GM12878 (cell line): ENCODE measurements at regions of chr17 and their contacts with region 1.

Region 1: DNA sequence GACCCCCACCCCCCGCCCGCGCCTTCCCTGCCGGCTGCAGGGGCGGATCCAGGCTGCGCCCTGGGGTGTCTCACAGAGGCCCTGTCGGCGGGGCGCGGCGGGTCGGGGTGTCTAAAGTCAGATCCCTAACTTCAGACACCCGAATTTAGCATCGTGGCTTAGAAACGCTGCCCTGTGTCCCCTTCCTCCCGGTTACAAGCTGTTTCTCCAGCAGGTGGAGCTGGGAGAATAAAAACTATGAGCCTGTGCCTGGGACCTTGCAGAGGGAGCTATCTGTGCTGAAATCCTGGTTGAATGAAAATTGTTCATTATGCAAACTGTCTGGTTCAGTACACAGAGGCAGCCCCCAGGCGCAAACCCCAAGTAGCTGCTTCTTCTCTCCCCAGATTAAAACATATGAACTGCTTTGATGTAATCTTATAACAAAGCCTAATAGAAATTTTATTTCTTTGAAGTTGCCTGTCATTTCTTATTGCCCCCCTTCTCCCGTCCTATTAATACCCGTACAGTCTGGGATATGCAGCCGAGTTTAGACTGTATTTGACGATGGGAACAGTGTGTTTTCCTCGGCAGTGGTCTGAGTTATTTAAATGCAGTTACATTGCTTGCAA is 79.0 kb downstream of the RPA1 start:
- DNase-seq: no peak
- ATAC-seq: peak; percentile 84
- H3K4me3 ChIP-seq: peak overlapping the region; percentile 11; the same call in 1 of the 2 replicates
- H3K27ac ChIP-seq: no peak overlapping the region
- H3K4me1 ChIP-seq: peaks cover 17% of the 10 kb centered on the region
- H3K27me3 ChIP-seq: no peaks in the 10 kb centered on the region
- CTCF ChIP-seq: peak; percentile 48 to 66 (median 49); a peak in 4 of 6 replicates
- EP300 ChIP-seq: no peak
- POLR2A ChIP-seq: no peak
- RAD21 ChIP-seq: peak; percentile 73

Region 2: DNA sequence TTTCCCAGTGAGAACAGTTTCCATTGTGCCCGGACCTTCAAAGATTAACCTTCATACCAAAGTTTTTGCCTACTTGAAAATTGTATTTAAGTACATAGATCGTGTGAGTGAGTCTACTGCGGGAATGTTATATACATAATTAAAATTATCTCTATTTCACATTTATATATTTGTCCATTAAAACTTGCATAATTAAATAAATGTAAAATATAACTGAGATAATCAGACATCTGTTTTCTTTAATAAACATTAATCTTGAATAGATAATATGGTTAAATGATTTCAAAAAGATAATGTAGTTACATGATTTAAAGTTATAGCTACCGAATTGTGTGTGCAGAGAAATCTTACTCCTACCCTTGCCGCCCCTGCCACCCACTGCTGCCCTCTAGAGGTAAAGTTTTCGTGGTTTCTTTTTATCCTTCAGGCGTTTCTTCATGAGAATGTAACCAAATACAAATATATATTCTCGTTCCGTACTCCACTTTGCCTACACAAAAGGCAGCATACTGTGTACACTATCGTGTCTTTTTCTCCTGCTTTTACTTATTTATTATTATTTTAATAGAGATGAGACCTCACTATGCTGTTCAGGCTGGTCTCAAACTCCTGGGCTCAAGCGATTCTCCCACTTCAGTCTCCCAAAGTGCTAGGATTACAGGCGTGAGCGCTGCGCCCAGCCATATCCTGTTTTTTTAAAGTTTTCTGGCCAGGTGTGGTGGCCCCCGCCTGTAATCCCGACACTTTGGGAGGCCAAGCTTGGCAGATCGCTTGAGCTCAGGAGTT is 43.4 kb before region 1 on chr17:
- CTCF ChIA-PET with region 1: no interaction called
- POLR2A ChIA-PET with region 1: no interaction called
- RAD21 ChIA-PET with region 1: no interaction called
- SMC1A ChIA-PET with region 1: no interaction called
- in situ Hi-C with region 1: no loop called
- intact Hi-C with region 1: no loop called
- DNase-seq: no peak
- ATAC-seq: peak; percentile 79
- H3K4me3 ChIP-seq: no peak overlapping the region
- H3K27ac ChIP-seq: no peak overlapping the region
- H3K4me1 ChIP-seq: no peaks in the 10 kb centered on the region
- H3K27me3 ChIP-seq: no peaks in the 10 kb centered on the region
- CTCF ChIP-seq: peak; percentile 54 to 70 (median 59)
- EP300 ChIP-seq: no peak
- POLR2A ChIP-seq: no peak
- RAD21 ChIP-seq: peak; percentile 65

Region 3: DNA sequence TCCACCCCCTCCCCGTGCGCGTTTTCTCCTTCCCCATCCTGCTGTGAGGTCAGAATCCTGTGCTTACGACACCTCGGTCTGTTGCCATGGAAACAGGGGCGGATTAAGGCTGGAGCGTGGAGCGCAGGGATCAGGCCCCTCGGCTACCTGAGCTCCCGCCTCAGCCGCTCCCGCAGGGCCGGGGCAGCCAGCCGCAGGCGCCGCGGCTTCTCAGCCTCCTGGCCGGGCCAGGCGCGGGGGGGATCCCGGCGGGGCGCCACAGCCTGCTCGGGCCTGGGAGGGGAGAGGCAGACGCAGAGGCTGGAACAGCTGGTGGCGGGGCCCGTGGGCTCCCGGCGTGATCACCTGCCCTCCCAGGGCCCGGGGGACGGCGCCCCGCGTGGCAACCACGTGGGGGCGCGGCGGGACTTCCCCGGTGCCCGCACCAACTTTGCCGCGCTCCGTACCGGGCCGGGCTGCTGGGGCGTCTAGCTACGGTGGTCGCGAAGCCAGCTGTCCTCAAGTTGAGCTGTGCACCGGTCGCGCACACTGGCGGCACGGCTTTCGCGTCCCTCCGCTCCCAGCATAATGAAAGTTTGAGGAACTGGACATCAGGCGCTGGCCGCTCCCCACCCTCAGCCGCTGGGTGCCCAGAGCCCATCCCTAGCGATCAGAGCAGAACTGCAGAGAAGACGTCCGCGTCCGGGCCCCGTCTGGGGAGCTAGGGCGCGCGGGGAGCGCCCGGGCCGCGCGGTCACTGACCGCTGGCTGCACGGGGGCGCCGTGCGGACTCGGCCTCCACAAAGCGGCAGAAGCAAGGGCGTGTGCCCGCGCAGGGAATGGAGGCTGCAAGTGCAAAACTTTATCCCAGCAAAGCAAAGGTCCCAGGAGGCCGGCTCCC is 115.1 kb after region 1 on chr17:
- CTCF ChIA-PET with region 1: interaction called, 4 read pairs
- POLR2A ChIA-PET with region 1: no interaction called
- RAD21 ChIA-PET with region 1: interaction called, 3 read pairs
- SMC1A ChIA-PET with region 1: interaction called, 3 read pairs
- in situ Hi-C with region 1: loop called (anchors 25 kb)
- intact Hi-C with region 1: no loop called
- DNase-seq: no peak
- ATAC-seq: no peak
- H3K4me3 ChIP-seq: no peak overlapping the region
- H3K27ac ChIP-seq: no peak overlapping the region
- H3K4me1 ChIP-seq: peaks cover 4% of the 10 kb centered on the region
- H3K27me3 ChIP-seq: peaks cover 18 to 25% of the 10 kb centered on the region in 2 experiments
- CTCF ChIP-seq: no peak
- EP300 ChIP-seq: no peak
- POLR2A ChIP-seq: no peak
- RAD21 ChIP-seq: no peak